Naive thymus-derived CD8-positive, alpha-beta T cell (primary cell): ENCODE measurements at regions of chr1 and their contacts with region 1.

Region 1: GRCh38 chr1:145927063-145927886 is at the start of gene RBM8A:
- DNase-seq: peak; percentile 72 to 98 (median 95)
- ATAC-seq: peak; percentile 94 to 96
- H3K4me3 Mint-ChIP-seq: peak within 1 kb of the TSS in 3 of 10 donors; percentile 43 to 80 (median 52)
- H3K27ac Mint-ChIP-seq: peak within 1 kb of the TSS in 2 of 10 donors; percentile 91 to 94
- H3K4me1 Mint-ChIP-seq: peaks cover 7 to 18% (median 16%) of the 10 kb centered on the region in 4 donors
- H3K27me3 Mint-ChIP-seq: no peaks in the 10 kb centered on the region
- polyA plus RNA-seq, gene RBM8A: 127 to 191 (median 148) TPM

Region 2: DNA sequence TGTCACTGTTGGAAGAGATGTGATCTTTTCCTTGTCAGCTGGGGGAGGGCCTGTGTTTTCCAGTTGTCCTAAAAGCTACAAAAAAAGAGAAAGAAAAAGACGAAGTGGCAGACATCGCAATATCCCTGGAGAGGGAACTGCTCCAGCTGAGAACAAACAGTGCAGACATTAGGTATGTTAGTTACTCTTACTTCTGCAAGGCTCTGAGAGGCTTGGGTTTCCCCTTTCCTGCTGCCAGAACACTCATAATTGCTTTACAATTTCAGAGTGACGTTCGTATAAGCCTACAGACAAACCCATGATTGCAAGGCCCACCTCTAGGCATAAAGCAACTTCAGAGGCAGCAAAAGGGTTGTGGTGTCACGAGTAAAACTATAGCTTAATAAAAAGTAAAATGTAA is 176.8 kb before region 1 on chr1:
- POLR2A ChIA-PET with region 1: no interaction called
- DNase-seq: no peak
- ATAC-seq: no peak
- H3K4me3 Mint-ChIP-seq: no peak overlapping the region
- H3K27ac Mint-ChIP-seq: no peak overlapping the region
- H3K4me1 Mint-ChIP-seq: peaks cover 0 to 1% (median 0%) of the 10 kb centered on the region in 4 donors
- H3K27me3 Mint-ChIP-seq: no peaks in the 10 kb centered on the region

Region 3: GRCh38 chr1:145823565-145824498 is 103.4 kb before region 1 on chr1 and contains the starts of genes POLR3C and RNF115:
- POLR2A ChIA-PET with region 1: interaction called, 10 read pairs
- DNase-seq: peak; percentile 79 to 94 (median 84)
- ATAC-seq: peak; percentile 95 to 96
- H3K4me3 Mint-ChIP-seq: peak within 1 kb of the TSS; percentile 96 to 99 (median 97)
- H3K27ac Mint-ChIP-seq: peak within 1 kb of the TSS; percentile 91 to 98 (median 97)
- H3K4me1 Mint-ChIP-seq: peaks cover 15 to 40% (median 22%) of the 10 kb centered on the region in 4 donors
- H3K27me3 Mint-ChIP-seq: no peaks in the 10 kb centered on the region
- polyA plus RNA-seq, gene POLR3C: 40.2 to 54.5 (median 40.7) TPM
- polyA plus RNA-seq, gene RNF115: 5.8 to 6.6 (median 6.1) TPM

Region 4: DNA sequence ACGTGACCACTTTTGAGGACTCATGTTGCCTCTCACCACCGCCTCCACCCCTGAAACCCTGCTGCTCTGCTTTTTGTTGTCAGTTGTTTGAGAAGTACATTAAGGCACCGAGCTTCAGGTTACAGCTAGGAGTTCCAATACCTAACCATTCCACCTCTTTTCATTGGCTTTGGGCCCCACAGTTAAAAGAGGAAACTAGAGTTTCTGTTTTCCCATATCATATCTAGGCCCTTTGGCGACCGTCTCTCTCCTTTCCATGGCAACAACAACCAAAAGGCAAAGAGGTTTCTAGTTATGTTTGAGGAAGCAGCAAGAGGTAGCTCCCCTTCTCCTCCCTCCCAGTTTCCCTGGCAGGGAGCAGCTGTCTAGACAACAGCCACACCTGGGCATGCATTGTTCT is 47.5 kb before region 1 on chr1:
- POLR2A ChIA-PET with region 1: no interaction called
- DNase-seq: no peak
- ATAC-seq: no peak
- H3K4me3 Mint-ChIP-seq: no peak overlapping the region
- H3K27ac Mint-ChIP-seq: no peak overlapping the region
- H3K4me1 Mint-ChIP-seq: peaks cover under 1 to 3% (median 2%) of the 10 kb centered on the region in 4 donors
- H3K27me3 Mint-ChIP-seq: peaks cover 3 to 34% (median 13%) of the 10 kb centered on the region in 5 donors

Region 5: DNA sequence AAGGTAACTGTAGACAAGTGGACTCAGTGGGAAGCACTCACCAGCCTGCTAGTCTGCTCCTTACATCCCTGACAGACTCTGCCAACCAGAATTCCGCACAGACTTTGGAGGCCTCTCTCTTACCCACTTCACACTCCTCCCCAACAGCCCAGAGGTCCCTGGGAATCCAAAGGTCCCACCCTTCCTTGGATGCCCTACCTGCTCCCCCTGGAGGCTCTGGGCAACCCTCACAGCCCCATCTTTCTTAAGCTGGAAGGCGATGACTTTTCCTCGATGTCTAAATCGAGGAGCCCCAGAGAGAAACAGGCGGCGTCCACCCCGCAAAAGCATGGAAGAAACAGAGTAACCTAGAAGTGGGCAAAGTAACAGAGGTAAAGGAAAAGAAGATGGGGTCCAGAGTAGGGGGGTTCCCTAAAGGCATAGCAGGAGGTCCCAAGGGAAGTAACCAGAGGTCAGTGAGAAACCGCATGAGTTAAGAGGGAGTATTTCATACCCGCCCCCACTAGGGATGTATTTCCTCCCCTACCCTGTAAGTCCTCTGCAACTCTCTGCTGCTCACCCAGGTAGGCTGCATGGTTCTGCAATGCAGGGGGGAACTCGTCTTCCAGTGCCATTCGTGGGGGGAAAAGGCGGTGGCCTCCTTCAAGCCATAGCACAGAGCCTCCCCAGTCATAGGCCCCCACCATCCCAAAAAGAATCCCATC is 25.8 kb before region 1 on chr1:
- POLR2A ChIA-PET with region 1: no interaction called
- DNase-seq: no peak
- ATAC-seq: no peak
- H3K4me3 Mint-ChIP-seq: no peak overlapping the region
- H3K27ac Mint-ChIP-seq: peak overlapping the region in 1 of 10 donors; percentile 48
- H3K4me1 Mint-ChIP-seq: peaks cover 0 to 2% (median 0%) of the 10 kb centered on the region in 4 donors
- H3K27me3 Mint-ChIP-seq: no peaks in the 10 kb centered on the region

Region 6: GRCh38 chr1:145957443-145958319 is 30.4 kb after region 1 on chr1 and contains the start of gene LIX1L:
- POLR2A ChIA-PET with region 1: interaction called, 288 read pairs
- DNase-seq: peak; percentile 88 to 97 (median 94)
- ATAC-seq: peak; percentile 83 to 86
- H3K4me3 Mint-ChIP-seq: peak within 1 kb of the TSS; percentile 88 to 99 (median 94)
- H3K27ac Mint-ChIP-seq: peak within 1 kb of the TSS; percentile 87 to 99 (median 98)
- H3K4me1 Mint-ChIP-seq: peaks cover 42 to 85% (median 73%) of the 10 kb centered on the region in 4 donors
- H3K27me3 Mint-ChIP-seq: no peaks in the 10 kb centered on the region
- polyA plus RNA-seq, gene LIX1L: 26.3 to 31.7 (median 29.3) TPM

Region 7: DNA sequence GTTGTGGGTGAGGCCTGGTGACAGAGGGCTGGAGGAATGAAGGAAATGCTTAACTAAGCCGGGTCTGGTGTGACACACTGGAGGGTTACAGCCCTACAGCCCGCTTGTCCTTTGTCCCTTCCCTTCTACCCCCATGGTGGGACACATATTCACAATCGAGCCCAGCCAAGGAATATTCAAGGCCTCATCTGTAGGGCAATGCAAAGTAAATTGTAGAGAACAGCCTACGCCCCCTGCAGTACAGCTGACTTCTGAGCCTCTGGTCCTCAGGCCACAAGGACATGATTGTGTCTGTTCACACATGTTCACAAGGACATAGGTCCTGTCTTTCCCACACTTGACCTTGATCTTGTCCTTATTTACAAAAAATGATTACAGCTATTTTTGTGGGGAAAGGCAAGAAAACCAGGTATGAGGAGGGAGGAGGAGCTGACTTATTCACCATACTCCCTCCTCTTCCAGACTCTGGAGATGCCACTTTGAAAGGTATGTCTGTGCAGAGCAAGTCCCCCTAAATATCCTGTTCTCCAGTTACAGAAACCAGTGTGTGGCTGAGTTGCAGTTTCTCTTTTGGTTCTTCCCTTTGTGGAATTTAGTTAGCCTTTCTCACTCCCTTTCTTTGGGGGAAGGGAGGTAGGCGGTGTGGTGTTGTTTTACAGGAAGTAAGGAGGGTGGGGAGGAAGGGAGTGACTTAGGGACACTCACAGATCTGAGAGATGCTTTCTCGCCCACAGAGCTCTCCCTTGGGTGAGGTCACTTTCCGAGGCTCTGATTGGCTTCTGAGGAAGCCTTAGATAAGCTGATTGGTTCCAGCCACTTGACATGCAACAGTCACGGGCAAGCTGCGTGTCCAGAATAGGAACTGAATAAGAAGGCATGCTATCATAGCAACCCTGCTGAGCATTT is 51.8 kb after region 1 on chr1:
- POLR2A ChIA-PET with region 1: interaction called, 27 read pairs
- DNase-seq: peak; percentile 42 to 91 (median 78)
- ATAC-seq: peak; percentile 74 to 79
- H3K4me3 Mint-ChIP-seq: no peak overlapping the region
- H3K27ac Mint-ChIP-seq: no peak overlapping the region
- H3K4me1 Mint-ChIP-seq: peaks cover 2 to 45% (median 39%) of the 10 kb centered on the region in 4 donors
- H3K27me3 Mint-ChIP-seq: no peaks in the 10 kb centered on the region

Region 8: DNA sequence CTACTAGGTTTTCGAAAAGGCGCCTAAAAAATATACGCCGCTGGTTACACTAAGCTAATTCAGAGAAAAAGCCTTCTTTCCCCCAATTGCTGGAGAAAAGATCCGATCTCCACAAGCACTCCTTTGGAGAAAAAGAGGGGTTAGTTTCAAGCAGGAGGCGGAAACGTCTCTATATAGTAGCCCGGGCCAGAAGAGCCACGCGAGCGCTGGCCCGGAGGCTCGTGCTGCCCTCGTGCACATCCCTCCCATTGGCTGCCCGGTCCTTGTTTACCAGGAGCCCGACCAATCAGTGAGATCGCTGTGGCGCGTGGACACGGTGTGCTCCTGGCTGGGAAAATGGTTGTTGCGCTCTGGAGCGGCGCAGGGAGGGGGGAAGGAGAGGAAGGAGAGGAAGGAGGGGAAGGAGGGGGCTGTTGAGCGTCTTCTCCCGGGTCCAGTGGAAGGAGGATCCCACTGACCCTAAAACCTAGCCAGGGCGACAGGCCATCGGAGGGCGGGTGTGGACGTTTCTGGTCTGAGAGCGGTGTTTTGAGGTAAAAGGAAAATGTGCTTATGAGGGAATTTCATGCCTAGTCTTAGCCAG is 69.2 kb after region 1 on chr1 and contains the start of gene TXNIP:
- POLR2A ChIA-PET with region 1: interaction called, 49 read pairs
- DNase-seq: peak; percentile 88 to 98 (median 91)
- ATAC-seq: peak; percentile 67 to 85
- H3K4me3 Mint-ChIP-seq: peak within 1 kb of the TSS; percentile 91 to 100 (median 99)
- H3K27ac Mint-ChIP-seq: peak within 1 kb of the TSS; percentile 95 to 100 (median 99)
- H3K4me1 Mint-ChIP-seq: peaks cover 31 to 72% (median 51%) of the 10 kb centered on the region in 4 donors
- H3K27me3 Mint-ChIP-seq: no peaks in the 10 kb centered on the region
- polyA plus RNA-seq, gene TXNIP: 4,009 to 5,114 (median 5,016) TPM